Esophagus squamous epithelium (tissue), 5 donors: ENCODE measurements at regions of chr1 and their contacts with region 1.

Region 1: DNA sequence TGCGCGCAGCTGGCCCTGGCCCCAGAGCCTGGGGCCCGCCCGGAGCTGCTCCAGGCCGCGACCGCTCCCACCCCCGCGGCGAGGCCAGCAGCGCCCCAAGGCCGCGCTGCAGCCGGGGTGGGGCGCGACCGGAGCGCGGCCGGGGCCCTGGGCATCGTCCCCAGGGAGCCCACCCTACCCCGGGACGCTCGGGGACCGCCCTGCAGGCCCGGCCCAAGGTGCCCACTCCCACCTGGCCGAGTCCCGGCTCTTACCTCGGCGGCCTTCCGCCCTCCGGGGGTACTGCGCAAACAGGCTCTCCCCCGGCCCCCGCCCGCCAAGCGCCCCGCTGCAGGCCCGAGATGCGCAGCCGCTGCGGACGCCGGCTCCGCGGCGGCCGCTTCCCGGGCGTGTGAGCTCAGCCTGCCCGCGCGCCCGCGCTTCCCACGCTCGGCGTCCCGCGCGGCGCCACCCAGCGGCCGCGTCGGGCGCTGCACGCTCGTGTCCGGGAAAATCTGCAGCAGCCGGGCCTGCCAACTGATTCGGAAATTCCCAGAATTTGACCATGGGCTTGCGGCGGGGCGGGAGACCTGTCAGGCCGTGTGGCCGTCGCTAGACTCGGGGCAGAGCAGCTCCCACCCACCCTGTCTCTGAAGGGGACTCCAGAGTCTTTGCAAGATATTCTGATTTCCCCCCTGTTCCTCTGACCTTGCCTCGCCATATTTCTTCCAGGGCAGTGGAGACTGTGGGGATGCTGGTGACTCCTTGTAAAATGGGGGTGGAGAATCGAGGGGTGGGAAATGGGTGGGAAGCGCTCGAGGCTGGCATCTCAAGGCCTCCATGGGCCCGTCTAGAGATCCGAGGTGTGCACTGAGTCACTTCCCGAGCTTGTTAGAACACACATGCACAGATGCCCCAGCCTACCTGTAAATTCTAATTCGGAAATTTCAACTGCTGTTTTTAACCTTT is 41.9 kb downstream of the CD34 start:
- DNase-seq: no peak
- H3K4me3 ChIP-seq: peak overlapping the region; percentile 69 to 95 (median 84)
- H3K27ac ChIP-seq: peak overlapping the region; percentile 95 to 98 (median 96)
- H3K4me1 ChIP-seq: peaks cover 46 to 95% (median 56%) of the 10 kb centered on the region in 3 donors
- H3K27me3 ChIP-seq: no peaks in the 10 kb centered on the region
- CTCF ChIP-seq: peak; percentile 67 to 99 (median 94)
- POLR2A ChIP-seq: peak in 2 of 4 donors; percentile 80 to 84

Region 2: GRCh38 chr1:207374887-207375286 is 494.2 kb before region 1 on chr1:
- intact Hi-C with region 1: no loop called
- DNase-seq: no peak
- H3K4me3 ChIP-seq: no peak overlapping the region
- H3K27ac ChIP-seq: no peak overlapping the region
- H3K4me1 ChIP-seq: no peaks in the 10 kb centered on the region
- H3K27me3 ChIP-seq: no peaks in the 10 kb centered on the region
- CTCF ChIP-seq: no peak
- POLR2A ChIP-seq: no peak

Region 3: DNA sequence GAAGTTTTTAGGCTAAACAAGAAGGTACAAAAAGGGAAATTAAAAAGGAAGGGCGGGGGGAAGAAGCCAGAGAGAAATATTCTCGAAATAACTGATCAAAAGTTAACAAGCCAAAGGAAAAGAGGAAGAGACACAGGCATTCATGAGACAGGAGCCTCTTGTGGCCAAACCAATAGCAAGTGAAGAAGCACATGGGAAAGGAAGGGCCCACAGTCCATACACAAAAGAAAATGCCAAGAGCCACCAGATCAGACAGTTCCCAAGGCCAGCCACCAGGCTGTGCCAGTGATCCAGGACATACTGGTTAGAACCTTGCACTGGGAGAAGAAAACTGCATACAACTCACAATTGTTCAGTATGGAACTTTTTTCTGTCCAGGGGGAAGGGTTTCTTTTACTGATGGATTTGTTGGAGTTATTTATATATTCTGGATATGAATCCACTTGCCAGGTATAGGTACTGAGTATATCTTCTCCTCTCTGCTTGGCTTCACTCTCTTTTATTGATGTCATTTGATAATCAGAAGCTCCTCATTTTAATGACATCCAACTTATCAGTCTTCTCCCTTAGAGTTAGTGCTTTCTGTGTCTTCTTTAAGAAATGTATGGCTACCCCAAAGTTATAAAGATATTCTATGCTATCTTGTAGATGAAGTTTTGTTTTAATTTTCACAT is 40.4 kb before region 1 on chr1:
- intact Hi-C with region 1: loop called (anchors 5 kb)
- DNase-seq: no peak
- H3K4me3 ChIP-seq: no peak overlapping the region
- H3K27ac ChIP-seq: peak overlapping the region; percentile 75 to 96 (median 92)
- H3K4me1 ChIP-seq: peaks cover 61 to 95% (median 85%) of the 10 kb centered on the region in 3 donors
- H3K27me3 ChIP-seq: no peaks in the 10 kb centered on the region
- CTCF ChIP-seq: peak; percentile 71 to 97 (median 94)
- POLR2A ChIP-seq: no peak

Region 4: DNA sequence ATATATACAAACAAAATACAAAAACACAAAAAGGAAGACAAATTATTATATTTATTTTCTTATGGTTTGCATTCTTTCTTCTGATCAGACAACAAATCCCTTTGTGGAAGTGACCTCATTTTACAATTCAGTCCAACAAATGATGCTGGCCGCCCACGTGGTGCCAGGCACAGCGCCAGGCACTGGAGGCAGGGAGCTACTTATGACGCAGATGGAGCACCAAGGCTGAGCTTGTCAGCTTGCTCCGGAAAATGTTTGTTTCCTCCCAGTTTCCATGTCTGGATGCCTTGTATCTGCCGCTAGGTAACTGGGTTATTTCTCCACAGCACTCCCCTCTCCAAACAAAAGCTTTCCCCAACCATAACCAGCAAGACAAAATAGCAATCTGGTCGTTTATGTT is 72.6 kb after region 1 on chr1:
- intact Hi-C with region 1: no loop called
- DNase-seq: no peak
- H3K4me3 ChIP-seq: peak overlapping the region in 1 of 4 donors; percentile 7
- H3K27ac ChIP-seq: peak overlapping the region in 3 of 4 donors; percentile 51 to 68 (median 56)
- H3K4me1 ChIP-seq: no peaks in the 10 kb centered on the region
- H3K27me3 ChIP-seq: peaks cover 0 to 7% (median 0%) of the 10 kb centered on the region in 4 donors
- CTCF ChIP-seq: no peak
- POLR2A ChIP-seq: no peak